Sciatic nerve (tissue), 2 donors: ENCODE measurements at regions of chr1 and their contacts with region 1.

Region 1: DNA sequence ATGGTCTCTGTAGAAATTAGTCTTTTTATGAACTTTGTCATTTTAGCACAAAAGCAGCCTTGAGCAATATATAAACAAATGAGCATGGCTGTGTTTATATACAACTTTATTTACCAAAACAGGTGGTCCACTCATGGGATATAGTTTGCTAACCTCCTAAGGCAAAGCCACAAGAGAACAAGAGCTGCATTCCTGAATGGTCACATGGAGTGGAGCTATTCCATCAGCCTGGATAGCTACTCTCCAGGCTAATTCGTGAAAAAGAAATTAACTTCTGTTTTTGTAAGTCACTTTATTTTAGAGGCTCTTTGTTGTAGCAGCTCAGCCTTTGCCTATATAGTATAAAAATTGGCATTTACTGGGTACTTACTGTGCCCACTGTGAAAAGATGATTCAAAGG is 163.3 kb upstream of the FAM78B start:
- DNase-seq: no peak
- ATAC-seq: no peak

Region 2: DNA sequence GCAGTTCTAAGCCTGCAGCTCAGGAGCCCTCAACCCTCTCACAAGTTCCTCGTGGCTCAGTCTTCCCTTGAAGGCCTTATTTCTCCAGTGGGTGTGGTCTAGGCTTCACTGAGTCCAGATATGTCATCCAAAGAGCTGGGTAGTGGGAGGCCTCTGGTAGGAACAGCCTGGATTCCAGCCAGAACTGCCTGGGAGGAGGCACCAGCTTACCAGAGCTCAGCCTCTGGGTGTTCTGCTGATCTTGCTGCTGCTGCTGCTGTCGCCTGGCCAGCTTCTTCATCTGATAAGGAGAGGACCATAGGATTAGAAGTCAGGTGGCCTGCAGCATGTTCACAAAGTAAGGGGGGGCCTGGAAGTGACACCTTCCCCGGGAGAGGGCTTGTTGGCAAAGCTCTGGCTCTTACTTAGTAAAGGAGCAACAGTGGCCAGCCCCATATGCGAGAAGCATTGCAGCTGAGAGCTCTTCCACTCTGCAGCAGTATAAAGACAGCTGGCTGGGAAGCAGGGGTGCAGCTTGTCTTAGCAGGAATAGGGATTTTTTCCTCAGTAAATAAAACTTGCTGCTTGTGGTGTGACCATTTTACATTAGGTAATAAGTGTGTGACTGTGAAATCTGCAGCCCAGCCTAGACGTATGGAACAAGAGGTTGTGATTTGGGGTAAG is 1122.1 kb before region 1 on chr1:
- intact Hi-C with region 1: no loop called
- DNase-seq: no peak
- ATAC-seq: no peak

Region 3: GRCh38 chr1:166350490-166350889 is 20.4 kb after region 1 on chr1:
- intact Hi-C with region 1: loop called (anchors 1 kb)
- DNase-seq: no peak
- ATAC-seq: no peak